Panc1 (cell line): ENCODE measurements at regions of chr6 and their contacts with region 1.

Region 1: GRCh38 chr6:16216501-16217155 is 21.8 kb upstream of the GMPR start:
- DNase-seq: no peak
- ATAC-seq: no peak
- H3K4me3 ChIP-seq: no peak overlapping the region
- H3K27ac ChIP-seq: no peak overlapping the region
- H3K4me1 ChIP-seq: peaks cover 2% of the 10 kb centered on the region; the same call in 1 of the 2 replicates
- H3K27me3 ChIP-seq: no peaks in the 10 kb centered on the region; the same call in 1 of the 2 replicates
- CTCF ChIP-seq: no peak

Region 2: DNA sequence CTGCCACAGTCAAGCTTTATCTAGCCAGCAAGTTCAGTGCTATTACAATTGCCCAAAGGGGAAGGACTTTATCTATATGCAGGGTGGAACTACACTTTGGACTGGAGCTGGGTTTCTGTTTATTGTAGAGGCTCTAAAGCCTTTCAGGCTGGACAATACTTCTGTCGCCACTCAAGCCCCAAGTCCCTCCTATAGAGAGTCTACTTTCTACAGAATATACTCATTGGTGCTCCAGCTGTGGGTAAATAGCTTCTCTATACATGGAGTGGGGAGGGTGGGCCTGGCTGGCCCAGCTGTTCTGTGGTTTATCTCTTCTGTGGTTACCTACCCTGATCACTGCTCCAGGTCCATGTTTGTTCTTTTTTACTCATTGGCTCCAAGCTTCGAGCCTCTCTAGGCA is 239.6 kb before region 1 on chr6:
- CTCF ChIA-PET with region 1: no interaction called
- POLR2A ChIA-PET with region 1: no interaction called
- in situ Hi-C with region 1: no loop called
- intact Hi-C with region 1: no loop called
- DNase-seq: no peak
- ATAC-seq: no peak
- H3K4me3 ChIP-seq: no peak overlapping the region
- H3K27ac ChIP-seq: no peak overlapping the region
- H3K4me1 ChIP-seq: no peaks in the 10 kb centered on the region
- H3K27me3 ChIP-seq: no peaks in the 10 kb centered on the region
- CTCF ChIP-seq: no peak

Region 3: GRCh38 chr6:16168858-16169257 is 47.8 kb before region 1 on chr6:
- CTCF ChIA-PET with region 1: no interaction called
- POLR2A ChIA-PET with region 1: no interaction called
- in situ Hi-C with region 1: no loop called
- intact Hi-C with region 1: no loop called
- DNase-seq: no peak
- ATAC-seq: no peak
- H3K4me3 ChIP-seq: no peak overlapping the region
- H3K27ac ChIP-seq: no peak overlapping the region
- H3K4me1 ChIP-seq: no peaks in the 10 kb centered on the region
- H3K27me3 ChIP-seq: peaks cover 34% of the 10 kb centered on the region
- CTCF ChIP-seq: peak; percentile 59

Region 4: GRCh38 chr6:16248271-16248853 is 31.7 kb after region 1 on chr6:
- CTCF ChIA-PET with region 1: no interaction called
- POLR2A ChIA-PET with region 1: interaction called, 10 read pairs
- in situ Hi-C with region 1: no loop called
- intact Hi-C with region 1: no loop called
- DNase-seq: no peak
- ATAC-seq: no peak
- H3K4me3 ChIP-seq: no peak overlapping the region
- H3K27ac ChIP-seq: no peak overlapping the region
- H3K4me1 ChIP-seq: no peaks in the 10 kb centered on the region
- H3K27me3 ChIP-seq: no peaks in the 10 kb centered on the region
- CTCF ChIP-seq: no peak

Region 5: GRCh38 chr6:16562498-16562897 is 345.9 kb after region 1 on chr6:
- CTCF ChIA-PET with region 1: no interaction called
- POLR2A ChIA-PET with region 1: no interaction called
- in situ Hi-C with region 1: no loop called
- intact Hi-C with region 1: no loop called
- DNase-seq: no peak
- ATAC-seq: no peak
- H3K4me3 ChIP-seq: no peak overlapping the region
- H3K27ac ChIP-seq: no peak overlapping the region
- H3K4me1 ChIP-seq: peaks cover 4% of the 10 kb centered on the region; the same call in 1 of the 2 replicates
- H3K27me3 ChIP-seq: no peaks in the 10 kb centered on the region
- CTCF ChIP-seq: no peak